CD4-positive, alpha-beta memory T cell (primary cell): ENCODE measurements at regions of chr6 and their contacts with region 1.

Region 1: DNA sequence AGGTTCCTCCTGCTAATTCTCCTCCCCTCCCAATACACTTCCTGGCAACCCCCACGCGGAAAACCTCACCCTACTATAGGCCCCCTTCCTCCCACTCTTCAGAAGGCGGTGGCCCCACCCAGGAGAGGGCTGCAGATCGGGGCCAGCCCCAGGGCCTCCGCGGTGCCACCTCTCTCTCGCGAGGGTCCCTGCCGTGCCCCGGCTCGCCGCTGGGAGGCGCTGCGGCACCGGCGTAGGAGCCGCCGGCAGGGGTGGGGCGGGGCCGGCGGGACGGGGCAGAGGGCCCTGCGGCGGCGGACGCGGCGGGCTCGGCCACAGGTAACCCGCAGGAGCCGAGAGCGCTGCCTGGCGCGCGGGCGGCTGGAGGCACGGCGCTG is at the start of gene ANKRD6:
- DNase-seq: peak; percentile 68 to 86 (median 80)
- H3K4me3 ChIP-seq: peak within 1 kb of the TSS; percentile 39 to 44
- H3K4me3 Mint-ChIP-seq: peak within 1 kb of the TSS; percentile 88 to 93 (median 90)
- H3K27ac ChIP-seq: peak within 1 kb of the TSS; percentile 37
- H3K27ac Mint-ChIP-seq: peak within 1 kb of the TSS; percentile 47 to 90 (median 86)
- H3K4me1 ChIP-seq: peaks cover 10% of the 10 kb centered on the region
- H3K4me1 Mint-ChIP-seq: peaks cover 16 to 34% (median 24%) of the 10 kb centered on the region in 4 donors
- H3K27me3 ChIP-seq: no peaks in the 10 kb centered on the region
- H3K27me3 Mint-ChIP-seq: peaks cover 3 to 4% of the 10 kb centered on the region in 2 donors
- total RNA-seq, gene ANKRD6: 4.4 to 5.8 TPM

Region 2: DNA sequence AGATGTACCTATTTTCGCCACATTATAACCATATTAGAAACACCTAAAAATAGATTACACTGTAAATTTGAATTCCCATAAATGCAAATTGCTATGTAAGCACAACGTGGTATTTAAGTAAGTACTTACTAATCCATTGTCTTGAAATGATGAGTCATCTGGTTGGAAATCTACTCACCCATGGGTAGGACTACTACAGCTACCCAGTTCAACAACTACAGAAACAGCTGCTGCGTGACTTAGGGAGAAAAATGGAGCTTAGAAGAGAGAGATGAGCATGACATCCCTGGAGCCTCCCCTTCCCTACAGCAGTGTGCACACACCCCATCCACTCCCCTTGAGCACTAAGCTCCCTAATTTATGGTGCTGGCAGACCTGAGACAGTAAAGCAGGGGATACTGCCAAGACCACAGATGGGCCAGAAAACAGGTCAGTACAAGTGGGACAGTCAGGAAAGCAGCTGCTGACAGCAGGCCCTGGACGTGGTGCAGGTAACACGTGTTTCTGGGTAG is 47.7 kb before region 1 on chr6:
- CTCF ChIA-PET with region 1: no interaction called
- POLR2A ChIA-PET with region 1: no interaction called
- intact Hi-C with region 1: no loop called
- DNase-seq: no peak
- H3K4me3 ChIP-seq: no peak overlapping the region
- H3K4me3 Mint-ChIP-seq: no peak overlapping the region
- H3K27ac ChIP-seq: no peak overlapping the region
- H3K27ac Mint-ChIP-seq: no peak overlapping the region
- H3K4me1 ChIP-seq: no peaks in the 10 kb centered on the region
- H3K4me1 Mint-ChIP-seq: no peaks in the 10 kb centered on the region
- H3K27me3 ChIP-seq: no peaks in the 10 kb centered on the region
- H3K27me3 Mint-ChIP-seq: peaks cover 0 to 2% of the 10 kb centered on the region in 2 donors

Region 3: GRCh38 chr6:89412071-89413005 is 20.5 kb before region 1 on chr6 and contains the start of gene RRAGD:
- CTCF ChIA-PET with region 1: interaction called, 26 read pairs
- POLR2A ChIA-PET with region 1: interaction called, 3 read pairs
- intact Hi-C with region 1: no loop called
- DNase-seq: peak; percentile 57 to 75 (median 65)
- H3K4me3 ChIP-seq: peak within 1 kb of the TSS; percentile 38 to 49
- H3K4me3 Mint-ChIP-seq: peak within 1 kb of the TSS; percentile 90 to 98 (median 94)
- H3K27ac ChIP-seq: peak within 1 kb of the TSS; percentile 25
- H3K27ac Mint-ChIP-seq: peak within 1 kb of the TSS; percentile 72 to 91 (median 82)
- H3K4me1 ChIP-seq: peaks cover 19% of the 10 kb centered on the region
- H3K4me1 Mint-ChIP-seq: peaks cover 10 to 25% (median 16%) of the 10 kb centered on the region in 4 donors
- H3K27me3 ChIP-seq: peaks cover 4% of the 10 kb centered on the region
- H3K27me3 Mint-ChIP-seq: peaks cover 4 to 14% of the 10 kb centered on the region in 2 donors
- total RNA-seq, gene RRAGD: 5.9 to 6.8 TPM

Region 4: DNA sequence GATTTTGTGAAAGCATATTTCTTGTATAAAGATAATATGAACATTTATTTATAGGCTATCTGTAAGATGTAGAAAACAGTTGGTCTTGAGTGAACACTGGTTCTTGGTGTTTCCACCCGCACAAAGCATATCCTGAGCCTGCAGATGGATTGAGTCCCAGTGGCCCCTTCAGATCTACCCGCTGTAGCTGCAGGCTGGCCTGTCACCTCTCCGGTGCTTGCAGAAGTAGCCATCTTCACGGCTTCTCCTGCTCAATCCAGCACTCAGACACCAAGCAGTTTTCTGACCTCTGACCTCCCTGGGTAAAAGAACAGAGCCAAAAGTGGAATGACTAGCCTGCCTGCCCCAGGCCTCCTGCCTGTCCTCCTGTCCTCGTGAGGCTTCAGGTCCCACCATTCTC is 183.0 kb after region 1 on chr6:
- CTCF ChIA-PET with region 1: interaction called, 83 read pairs
- POLR2A ChIA-PET with region 1: interaction called, 3 read pairs
- intact Hi-C with region 1: no loop called
- DNase-seq: no peak
- H3K4me3 ChIP-seq: no peak overlapping the region
- H3K4me3 Mint-ChIP-seq: no peak overlapping the region
- H3K27ac ChIP-seq: no peak overlapping the region
- H3K27ac Mint-ChIP-seq: no peak overlapping the region
- H3K4me1 ChIP-seq: no peaks in the 10 kb centered on the region
- H3K4me1 Mint-ChIP-seq: no peaks in the 10 kb centered on the region
- H3K27me3 ChIP-seq: no peaks in the 10 kb centered on the region
- H3K27me3 Mint-ChIP-seq: no peaks in the 10 kb centered on the region

Region 5: DNA sequence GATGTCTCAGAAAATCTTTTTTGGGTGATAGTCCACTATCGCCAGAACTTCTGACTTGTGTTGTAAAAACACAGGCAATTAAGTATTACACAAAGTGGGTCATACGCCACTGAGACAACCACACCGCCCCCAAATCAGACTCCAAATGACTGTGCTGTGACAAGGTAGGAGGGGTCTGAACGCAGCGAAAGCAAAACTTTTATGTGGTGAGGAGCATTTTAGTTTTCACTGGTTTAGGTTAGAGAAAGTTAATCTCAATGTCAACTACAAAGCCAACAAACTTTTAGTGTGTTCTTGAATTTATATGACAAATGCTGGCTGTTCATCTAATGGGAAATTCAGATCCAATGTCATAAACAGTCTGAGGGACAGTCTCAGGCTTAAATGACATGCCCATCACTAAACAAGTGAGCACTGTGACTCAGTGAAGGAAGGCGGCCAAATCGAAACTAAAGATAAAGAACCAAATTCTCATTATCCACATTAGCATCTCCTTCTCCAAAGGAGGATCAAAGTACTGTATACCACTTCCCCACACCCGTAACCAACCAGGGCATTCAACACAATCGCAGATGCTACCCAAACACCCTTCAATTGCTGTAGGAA is 648.1 kb after region 1 on chr6:
- CTCF ChIA-PET with region 1: no interaction called
- POLR2A ChIA-PET with region 1: no interaction called
- intact Hi-C with region 1: no loop called
- DNase-seq: peak; percentile 76 to 90 (median 84)
- H3K4me3 ChIP-seq: peak overlapping the region; percentile 24 to 54
- H3K4me3 Mint-ChIP-seq: peak overlapping the region; percentile 80 to 98 (median 96)
- H3K27ac ChIP-seq: peak overlapping the region; percentile 64
- H3K27ac Mint-ChIP-seq: peak overlapping the region; percentile 91 to 99 (median 98)
- H3K4me1 ChIP-seq: peaks cover 75% of the 10 kb centered on the region
- H3K4me1 Mint-ChIP-seq: peaks cover 64 to 94% (median 79%) of the 10 kb centered on the region in 4 donors
- H3K27me3 ChIP-seq: no peaks in the 10 kb centered on the region
- H3K27me3 Mint-ChIP-seq: no peaks in the 10 kb centered on the region